B cell (primary cell): ENCODE measurements at regions of chr11 and their contacts with region 1.

Region 1: DNA sequence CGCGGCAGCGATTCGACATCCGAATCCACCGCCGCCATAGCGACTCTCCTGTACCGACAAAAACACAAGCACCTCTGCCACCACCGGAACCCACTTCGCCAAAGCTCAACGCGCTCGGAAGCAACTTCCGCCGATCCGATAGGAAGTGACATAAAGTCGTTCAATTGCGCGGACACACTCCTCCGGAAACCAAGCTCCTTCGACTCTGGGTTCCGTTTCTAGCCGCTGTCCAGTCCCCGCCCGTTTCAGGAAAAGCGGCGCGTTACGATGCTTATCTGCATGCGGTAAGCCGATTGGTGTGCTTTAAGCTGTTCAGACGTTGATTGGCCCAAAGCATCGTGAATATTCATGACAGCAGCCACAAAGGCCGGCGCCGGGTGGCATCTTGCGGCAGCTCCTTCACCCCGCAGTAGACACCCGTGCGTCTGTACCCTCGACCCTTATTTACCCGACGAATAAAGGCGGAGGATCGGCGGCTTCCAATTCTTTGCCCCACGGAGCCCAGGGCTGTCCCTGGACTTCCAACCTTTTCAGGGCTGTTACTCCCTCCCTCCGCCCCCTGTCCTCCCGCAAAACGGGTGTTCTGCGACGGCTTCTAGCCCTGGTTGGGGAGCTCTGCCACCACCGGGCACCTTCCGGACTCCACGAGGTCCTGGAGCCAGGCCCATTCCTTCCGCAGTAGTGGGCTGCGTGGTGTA is at the start of gene TUT1:
- DNase-seq: peak; percentile 99
- ATAC-seq: peak; percentile 89
- H3K4me3 ChIP-seq: peak within 1 kb of the TSS; percentile 85 to 97 (median 93)
- H3K4me3 Mint-ChIP-seq: peak within 1 kb of the TSS; percentile 91
- H3K27ac ChIP-seq: peak within 1 kb of the TSS; percentile 90
- H3K27ac Mint-ChIP-seq: peak within 1 kb of the TSS; percentile 96
- H3K4me1 ChIP-seq: peaks cover 23 to 34% of the 10 kb centered on the region in 2 donors
- H3K4me1 Mint-ChIP-seq: peaks cover 43% of the 10 kb centered on the region
- H3K27me3 ChIP-seq: no peaks in the 10 kb centered on the region
- H3K27me3 Mint-ChIP-seq: no peaks in the 10 kb centered on the region
- CTCF ChIP-seq: no peak
- total RNA-seq, gene TUT1: 33.8 and 47.7 TPM in 2 replicates

Region 2: DNA sequence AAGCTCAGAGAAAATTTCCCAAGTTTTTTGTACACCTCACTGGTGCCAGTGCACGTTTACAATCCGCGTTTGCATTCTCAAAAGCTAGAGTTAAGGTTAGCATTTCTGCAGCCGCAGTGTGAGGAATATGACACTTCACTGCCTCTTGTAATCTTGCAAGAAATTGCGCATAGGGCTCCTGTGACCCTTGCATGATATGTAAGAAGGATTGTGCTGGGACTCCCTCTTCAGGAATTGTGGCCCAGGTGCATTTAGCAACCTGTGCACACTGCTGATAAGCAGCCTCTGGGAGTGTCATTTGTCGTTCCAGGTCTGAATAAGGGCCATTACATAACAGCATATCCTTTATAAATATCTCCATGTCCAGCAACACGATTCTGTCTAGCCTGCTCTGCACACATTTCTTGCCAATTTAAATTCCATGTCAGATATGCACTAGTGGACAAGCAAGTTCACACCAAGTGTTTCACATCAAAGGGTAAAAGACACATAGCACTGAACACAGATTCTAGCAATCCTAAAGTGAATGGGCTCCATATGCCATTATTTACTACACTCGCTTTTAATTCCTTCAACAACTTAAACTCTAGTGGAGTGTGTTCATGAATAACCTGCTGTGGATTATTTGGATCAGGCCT is 537.0 kb before region 1 on chr11:
- CTCF ChIA-PET with region 1: no interaction called
- POLR2A ChIA-PET with region 1: no interaction called
- intact Hi-C with region 1: no loop called
- DNase-seq: no peak
- ATAC-seq: no peak
- H3K4me3 ChIP-seq: no peak overlapping the region
- H3K4me3 Mint-ChIP-seq: no peak overlapping the region
- H3K27ac ChIP-seq: no peak overlapping the region
- H3K27ac Mint-ChIP-seq: no peak overlapping the region
- H3K4me1 ChIP-seq: no peaks in the 10 kb centered on the region
- H3K4me1 Mint-ChIP-seq: no peaks in the 10 kb centered on the region
- H3K27me3 ChIP-seq: no peaks in the 10 kb centered on the region
- H3K27me3 Mint-ChIP-seq: peaks cover 34% of the 10 kb centered on the region
- CTCF ChIP-seq: peak; percentile 9

Region 3: GRCh38 chr11:62573592-62574362 is 17.8 kb before region 1 on chr11 and contains the start of gene EEF1G:
- CTCF ChIA-PET with region 1: interaction called, 25 read pairs
- POLR2A ChIA-PET with region 1: interaction called, 35 read pairs
- intact Hi-C with region 1: loop called (anchors 1 kb)
- DNase-seq: peak; percentile 99
- ATAC-seq: peak; percentile 93
- H3K4me3 ChIP-seq: peak within 1 kb of the TSS; percentile 74 to 99 (median 80)
- H3K4me3 Mint-ChIP-seq: peak within 1 kb of the TSS; percentile 92
- H3K27ac ChIP-seq: peak within 1 kb of the TSS; percentile 84 to 88
- H3K27ac Mint-ChIP-seq: peak within 1 kb of the TSS; percentile 95
- H3K4me1 ChIP-seq: peaks cover 12 to 25% of the 10 kb centered on the region in 2 donors
- H3K4me1 Mint-ChIP-seq: peaks cover 50% of the 10 kb centered on the region
- H3K27me3 ChIP-seq: no peaks in the 10 kb centered on the region
- H3K27me3 Mint-ChIP-seq: no peaks in the 10 kb centered on the region
- CTCF ChIP-seq: no peak
- total RNA-seq, gene EEF1G: 1,778 and 1,867 TPM in 2 replicates

Region 4: DNA sequence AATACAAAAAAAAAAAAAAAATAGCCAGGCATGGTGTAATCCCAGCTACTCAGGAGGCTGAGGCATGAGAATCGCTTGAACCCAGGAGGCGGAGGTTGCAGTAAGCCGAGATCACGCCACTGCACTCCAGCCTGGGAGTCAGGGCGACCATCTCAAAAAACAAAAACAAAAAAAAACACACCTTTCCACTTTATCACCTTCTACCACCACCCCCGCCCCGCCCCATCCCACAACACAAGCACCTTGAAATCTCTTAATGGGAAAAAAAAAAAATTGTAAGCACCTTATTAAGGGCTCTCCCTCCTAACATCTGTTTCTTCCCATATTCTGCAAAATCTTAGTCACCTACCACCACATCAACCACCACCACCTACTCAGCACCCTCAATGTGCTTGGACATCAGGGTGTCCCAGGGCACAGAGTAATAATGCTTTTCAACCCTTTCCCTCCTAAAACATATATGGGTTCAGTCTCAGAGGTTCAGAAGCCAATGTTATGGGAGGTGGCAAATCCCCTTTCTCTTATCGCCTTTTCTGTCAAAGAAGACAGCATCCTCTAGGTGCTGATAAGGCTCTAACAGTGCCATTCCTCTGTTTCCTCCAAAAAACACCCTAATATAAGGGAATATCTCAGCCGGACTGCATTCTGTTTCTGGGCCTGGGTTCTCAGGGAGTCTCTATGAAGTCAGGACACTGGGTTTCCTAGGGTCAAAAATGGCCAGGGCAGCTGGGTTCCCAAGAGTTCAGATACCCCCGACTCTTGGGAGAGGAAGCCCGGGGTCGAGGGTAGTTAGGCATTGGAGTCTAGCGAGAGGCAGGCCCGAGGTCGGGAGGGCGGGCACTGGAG is 60.8 kb after region 1 on chr11:
- CTCF ChIA-PET with region 1: interaction called, 7 read pairs
- POLR2A ChIA-PET with region 1: interaction called, 7 read pairs
- intact Hi-C with region 1: loop called (anchors 1 kb)
- DNase-seq: no peak
- ATAC-seq: no peak
- H3K4me3 ChIP-seq: peak overlapping the region; percentile 74 to 90 (median 83)
- H3K4me3 Mint-ChIP-seq: peak overlapping the region; percentile 94
- H3K27ac ChIP-seq: peak overlapping the region; percentile 68 to 89
- H3K27ac Mint-ChIP-seq: peak overlapping the region; percentile 97
- H3K4me1 ChIP-seq: peaks cover 14 to 18% of the 10 kb centered on the region in 2 donors
- H3K4me1 Mint-ChIP-seq: peaks cover 22% of the 10 kb centered on the region
- H3K27me3 ChIP-seq: no peaks in the 10 kb centered on the region
- H3K27me3 Mint-ChIP-seq: no peaks in the 10 kb centered on the region
- CTCF ChIP-seq: no peak

Region 5: GRCh38 chr11:62705880-62706849 is 114.6 kb after region 1 on chr11:
- CTCF ChIA-PET with region 1: interaction called, 8 read pairs
- POLR2A ChIA-PET with region 1: interaction called, 14 read pairs
- intact Hi-C with region 1: loop called (anchors 5 kb)
- DNase-seq: peak; percentile 95
- ATAC-seq: peak; percentile 73
- H3K4me3 ChIP-seq: peak overlapping the region; percentile 65 to 86 (median 69)
- H3K4me3 Mint-ChIP-seq: peak overlapping the region; percentile 92
- H3K27ac ChIP-seq: peak overlapping the region; percentile 61 to 91
- H3K27ac Mint-ChIP-seq: peak overlapping the region; percentile 91
- H3K4me1 ChIP-seq: peaks cover 39 to 50% of the 10 kb centered on the region in 2 donors
- H3K4me1 Mint-ChIP-seq: peaks cover 51% of the 10 kb centered on the region
- H3K27me3 ChIP-seq: no peaks in the 10 kb centered on the region
- H3K27me3 Mint-ChIP-seq: no peaks in the 10 kb centered on the region
- CTCF ChIP-seq: no peak

Region 6: GRCh38 chr11:62787005-62787759 is 195.6 kb after region 1 on chr11 and contains the start of gene TMEM179B:
- CTCF ChIA-PET with region 1: interaction called, 11 read pairs
- POLR2A ChIA-PET with region 1: interaction called, 4 read pairs
- intact Hi-C with region 1: no loop called
- DNase-seq: peak; percentile 98
- ATAC-seq: peak; percentile 70
- H3K4me3 ChIP-seq: peak within 1 kb of the TSS; percentile 87 to 97 (median 94)
- H3K4me3 Mint-ChIP-seq: peak within 1 kb of the TSS; percentile 97
- H3K27ac ChIP-seq: peak within 1 kb of the TSS; percentile 68 to 78
- H3K27ac Mint-ChIP-seq: peak within 1 kb of the TSS; percentile 96
- H3K4me1 ChIP-seq: peaks cover 27 to 35% of the 10 kb centered on the region in 2 donors
- H3K4me1 Mint-ChIP-seq: peaks cover 48% of the 10 kb centered on the region
- H3K27me3 ChIP-seq: no peaks in the 10 kb centered on the region
- H3K27me3 Mint-ChIP-seq: no peaks in the 10 kb centered on the region
- CTCF ChIP-seq: peak; percentile 65
- total RNA-seq, gene TMEM179B: 62.3 and 71.5 TPM in 2 replicates

Region 7: GRCh38 chr11:62860835-62861563 is 269.4 kb after region 1 on chr11:
- CTCF ChIA-PET with region 1: interaction called, 4 read pairs
- POLR2A ChIA-PET with region 1: interaction called, 11 read pairs
- intact Hi-C with region 1: loop called (anchors 5 kb)
- DNase-seq: no peak
- ATAC-seq: no peak
- H3K4me3 ChIP-seq: no peak overlapping the region
- H3K4me3 Mint-ChIP-seq: no peak overlapping the region
- H3K27ac ChIP-seq: no peak overlapping the region
- H3K27ac Mint-ChIP-seq: no peak overlapping the region
- H3K4me1 ChIP-seq: peaks cover 4 to 24% of the 10 kb centered on the region in 2 donors
- H3K4me1 Mint-ChIP-seq: peaks cover 19% of the 10 kb centered on the region
- H3K27me3 ChIP-seq: no peaks in the 10 kb centered on the region
- H3K27me3 Mint-ChIP-seq: no peaks in the 10 kb centered on the region
- CTCF ChIP-seq: no peak